WTC11 (cell line): ENCODE measurements at regions of chr12 and their contacts with region 1.

Region 1: DNA sequence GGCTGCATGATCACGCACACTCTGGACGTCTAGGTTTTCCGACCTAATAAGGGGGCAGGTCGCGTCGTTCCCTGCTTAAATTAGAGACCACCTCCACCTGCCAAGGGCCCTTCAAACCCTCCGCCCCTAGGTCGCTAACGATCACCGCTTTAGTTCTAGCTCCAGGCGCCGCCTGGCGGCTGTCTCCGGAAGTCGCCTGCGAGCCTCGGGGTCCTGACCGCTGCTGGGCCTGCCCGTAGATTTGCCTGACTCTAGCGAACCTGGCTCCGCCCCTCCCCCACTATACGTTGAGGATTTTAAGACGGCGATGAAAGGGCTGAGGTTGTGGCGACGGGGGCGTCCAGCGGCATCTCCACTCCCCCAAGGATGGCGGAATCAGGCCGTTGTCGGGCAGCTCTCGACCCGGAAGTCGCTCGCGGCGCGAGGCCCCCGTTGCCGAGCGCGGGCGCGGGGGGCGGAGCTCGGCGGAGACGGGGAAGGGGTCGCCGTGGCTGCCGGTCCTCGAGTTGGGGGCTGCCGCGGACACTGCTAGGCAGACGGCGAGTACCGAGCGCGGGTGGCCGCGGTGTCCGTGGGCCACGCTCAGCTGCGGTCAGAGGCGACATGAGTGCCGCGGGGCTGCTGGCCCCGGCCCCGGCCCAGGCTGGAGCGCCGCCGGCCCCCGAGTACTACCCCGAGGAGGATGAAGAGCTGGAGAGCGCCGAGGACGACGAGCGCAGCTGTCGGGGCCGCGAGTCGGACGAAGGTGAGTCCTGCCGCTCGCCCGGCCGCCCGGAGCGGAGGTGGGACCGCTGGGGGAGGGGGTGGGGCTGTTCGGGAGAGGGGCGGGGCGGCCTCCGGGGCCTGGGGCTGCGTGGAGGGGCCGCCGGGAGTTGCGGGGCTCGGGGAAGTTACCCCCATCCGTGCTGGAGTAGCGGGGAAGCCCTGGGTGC is at the start of gene SUDS3:
- DNase-seq: peak; percentile 97
- ATAC-seq: peak; percentile 16
- H3K4me3 Mint-ChIP-seq: peak within 1 kb of the TSS; percentile 89
- H3K27ac Mint-ChIP-seq: peak within 1 kb of the TSS; percentile 99
- H3K4me1 Mint-ChIP-seq: peaks cover 37% of the 10 kb centered on the region
- H3K27me3 Mint-ChIP-seq: peaks cover 5% of the 10 kb centered on the region
- CTCF ChIP-seq: peak; percentile 96
- total RNA-seq, gene SUDS3: 63.9 to 65.5 TPM (median 64.7 TPM) in 3 replicates

Region 2: GRCh38 chr12:118103604-118104382 is 272.6 kb before region 1 on chr12 and contains the start of gene VSIG10:
- CTCF ChIA-PET with region 1: interaction called, 11 read pairs
- POLR2A ChIA-PET with region 1: no interaction called
- DNase-seq: peak; percentile 68
- ATAC-seq: peak; percentile 75
- H3K4me3 Mint-ChIP-seq: peak within 1 kb of the TSS; percentile 95
- H3K27ac Mint-ChIP-seq: peak within 1 kb of the TSS; percentile 97
- H3K4me1 Mint-ChIP-seq: peaks cover 39% of the 10 kb centered on the region
- H3K27me3 Mint-ChIP-seq: no peaks in the 10 kb centered on the region
- CTCF ChIP-seq: no peak
- total RNA-seq, gene VSIG10: 69.7 to 82.5 TPM (median 74.4 TPM) in 3 replicates

Region 3: GRCh38 chr12:118135788-118136558 is 240.4 kb before region 1 on chr12 and contains the start of gene PEBP1:
- CTCF ChIA-PET with region 1: interaction called, 18 read pairs
- POLR2A ChIA-PET with region 1: interaction called, 9 read pairs
- DNase-seq: peak; percentile 87
- ATAC-seq: peak; percentile 95
- H3K4me3 Mint-ChIP-seq: peak within 1 kb of the TSS; percentile 89
- H3K27ac Mint-ChIP-seq: peak within 1 kb of the TSS; percentile 97
- H3K4me1 Mint-ChIP-seq: peaks cover 16% of the 10 kb centered on the region
- H3K27me3 Mint-ChIP-seq: no peaks in the 10 kb centered on the region
- CTCF ChIP-seq: no peak
- total RNA-seq, gene PEBP1: 347 to 366 TPM (median 363 TPM) in 3 replicates

Region 4: GRCh38 chr12:118175823-118176447 is 200.4 kb before region 1 on chr12:
- CTCF ChIA-PET with region 1: interaction called, 76 read pairs
- POLR2A ChIA-PET with region 1: no interaction called
- DNase-seq: no peak
- ATAC-seq: no peak
- H3K4me3 Mint-ChIP-seq: no peak overlapping the region
- H3K27ac Mint-ChIP-seq: no peak overlapping the region
- H3K4me1 Mint-ChIP-seq: peaks cover 7% of the 10 kb centered on the region; the same call in 1 of the 2 replicates
- H3K27me3 Mint-ChIP-seq: no peaks in the 10 kb centered on the region
- CTCF ChIP-seq: no peak

Region 5: GRCh38 chr12:118249547-118249946 is 126.8 kb before region 1 on chr12:
- CTCF ChIA-PET with region 1: no interaction called
- POLR2A ChIA-PET with region 1: no interaction called
- DNase-seq: no peak
- ATAC-seq: no peak
- H3K4me3 Mint-ChIP-seq: no peak overlapping the region
- H3K27ac Mint-ChIP-seq: no peak overlapping the region
- H3K4me1 Mint-ChIP-seq: no peaks in the 10 kb centered on the region
- H3K27me3 Mint-ChIP-seq: no peaks in the 10 kb centered on the region
- CTCF ChIP-seq: no peak

Region 6: DNA sequence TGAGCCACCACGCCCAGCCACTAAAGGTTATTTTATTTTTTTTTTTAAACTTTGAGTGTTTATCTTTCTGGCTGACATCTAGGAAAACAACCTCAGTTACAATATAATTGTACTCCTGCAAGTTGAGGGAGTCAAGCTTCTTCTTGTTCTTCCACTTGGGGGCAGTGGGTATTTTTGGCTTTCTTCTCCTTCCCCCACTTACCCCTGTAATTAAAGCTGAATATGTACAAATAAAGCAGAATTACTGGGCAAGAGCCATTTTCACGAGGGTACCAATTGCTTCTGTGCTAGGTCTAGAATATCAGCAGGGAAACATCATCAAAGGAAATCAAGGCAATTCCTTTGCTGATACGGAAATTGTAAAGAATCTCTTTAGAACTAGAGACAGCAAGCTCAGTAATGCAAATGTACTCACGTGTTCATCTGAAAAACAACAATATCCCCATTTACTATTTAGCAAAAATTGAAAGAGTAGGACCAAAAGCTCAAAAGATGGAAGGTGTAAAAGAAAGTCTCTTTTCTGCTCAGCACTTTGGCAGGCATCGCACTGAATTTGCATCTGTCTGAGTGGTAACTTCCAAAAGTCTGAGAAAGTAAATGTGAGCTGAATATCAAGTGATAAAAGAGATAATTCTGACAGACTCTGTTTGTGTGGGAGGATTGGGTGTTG is 76.4 kb before region 1 on chr12:
- CTCF ChIA-PET with region 1: interaction called, 14 read pairs
- POLR2A ChIA-PET with region 1: no interaction called
- DNase-seq: no peak
- ATAC-seq: no peak
- H3K4me3 Mint-ChIP-seq: no peak overlapping the region
- H3K27ac Mint-ChIP-seq: no peak overlapping the region
- H3K4me1 Mint-ChIP-seq: peaks cover 14% of the 10 kb centered on the region
- H3K27me3 Mint-ChIP-seq: no peaks in the 10 kb centered on the region
- CTCF ChIP-seq: no peak

Region 7: DNA sequence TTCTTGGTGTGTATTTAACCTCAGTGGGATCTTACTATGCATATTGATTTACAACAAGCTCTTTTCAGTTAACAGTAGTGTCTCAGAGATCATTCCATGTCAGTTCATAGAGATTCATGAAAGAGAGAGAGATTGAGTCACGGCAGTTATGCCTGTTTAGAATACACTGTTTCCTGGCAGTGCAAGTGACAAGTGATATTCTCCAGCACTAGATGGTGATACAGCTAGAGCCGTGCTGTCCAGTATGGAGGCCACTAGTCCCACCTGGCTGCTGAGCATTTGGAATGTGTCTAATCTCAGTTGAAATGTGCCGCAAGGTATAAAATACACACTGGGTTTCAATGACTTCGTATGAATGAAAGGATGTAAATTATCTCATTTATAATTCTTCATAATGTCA is 184.4 kb after region 1 on chr12:
- CTCF ChIA-PET with region 1: no interaction called
- POLR2A ChIA-PET with region 1: no interaction called
- DNase-seq: no peak
- ATAC-seq: no peak
- H3K4me3 Mint-ChIP-seq: no peak overlapping the region
- H3K27ac Mint-ChIP-seq: no peak overlapping the region
- H3K4me1 Mint-ChIP-seq: peaks cover 2% of the 10 kb centered on the region
- H3K27me3 Mint-ChIP-seq: no peaks in the 10 kb centered on the region
- CTCF ChIP-seq: no peak

Region 8: DNA sequence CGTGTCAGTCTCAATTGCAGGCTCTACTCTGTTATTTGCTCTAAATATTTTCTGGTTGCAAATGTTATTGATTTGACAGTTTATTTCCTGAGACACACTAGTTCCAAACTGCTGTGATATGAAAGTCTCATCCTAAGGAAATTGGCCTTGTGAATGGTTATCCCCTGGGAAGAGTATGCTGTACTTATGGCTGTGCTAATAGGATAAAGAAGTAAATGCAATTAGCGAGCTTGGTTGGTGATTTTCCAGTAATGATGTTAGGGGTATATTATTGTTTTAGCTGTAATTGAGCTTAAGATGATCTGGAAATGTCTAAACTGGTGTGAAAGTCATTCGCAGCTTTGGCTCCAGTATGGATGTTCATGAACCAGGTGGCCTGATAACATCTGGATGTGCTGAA is 197.9 kb after region 1 on chr12:
- CTCF ChIA-PET with region 1: no interaction called
- POLR2A ChIA-PET with region 1: no interaction called
- DNase-seq: no peak
- ATAC-seq: no peak
- H3K4me3 Mint-ChIP-seq: no peak overlapping the region
- H3K27ac Mint-ChIP-seq: no peak overlapping the region
- H3K4me1 Mint-ChIP-seq: no peaks in the 10 kb centered on the region
- H3K27me3 Mint-ChIP-seq: peaks cover 4% of the 10 kb centered on the region
- CTCF ChIP-seq: no peak